HCT116 (cell line): ENCODE measurements at regions of chr2 and their contacts with region 1.

Region 1: GRCh38 chr2:109396202-109397180 is 217.3 kb downstream of the SEPTIN10 start:
- DNase-seq: no peak
- ATAC-seq: peak; percentile 77
- H3K4me3 ChIP-seq: no peak overlapping the region
- H3K27ac ChIP-seq: no peak overlapping the region
- H3K4me1 ChIP-seq: no peaks in the 10 kb centered on the region
- H3K27me3 ChIP-seq: no peaks in the 10 kb centered on the region; the same call in none of the 2 replicates
- CTCF ChIP-seq: peak; percentile 22 to 34 (median 27); a peak in 4 of 6 replicates
- POLR2A ChIP-seq: no peak
- RAD21 ChIP-seq: peak; percentile 52

Region 2: GRCh38 chr2:109128048-109128465 is 268.4 kb before region 1 on chr2:
- CTCF ChIA-PET with region 1: no interaction called
- POLR2A ChIA-PET with region 1: no interaction called
- RAD21 ChIA-PET with region 1: no interaction called
- intact Hi-C with region 1: loop called (anchors 2 kb)
- DNase-seq: peak; percentile 26
- ATAC-seq: peak; percentile 92
- H3K4me3 ChIP-seq: no peak overlapping the region
- H3K27ac ChIP-seq: no peak overlapping the region
- H3K4me1 ChIP-seq: peaks cover 12 to 17% of the 10 kb centered on the region in 2 experiments; a peak in 3 of 4 replicates
- H3K27me3 ChIP-seq: peaks cover 13% of the 10 kb centered on the region; the same call in 1 of the 2 replicates
- CTCF ChIP-seq: peak; percentile 60 to 81 (median 78); a peak in 5 of 6 replicates
- POLR2A ChIP-seq: no peak
- RAD21 ChIP-seq: peak; percentile 87

Region 3: GRCh38 chr2:109486711-109487535 is 90.4 kb after region 1 on chr2:
- CTCF ChIA-PET with region 1: no interaction called
- POLR2A ChIA-PET with region 1: no interaction called
- RAD21 ChIA-PET with region 1: no interaction called
- intact Hi-C with region 1: no loop called
- DNase-seq: no peak
- ATAC-seq: no peak
- H3K4me3 ChIP-seq: no peak overlapping the region
- H3K27ac ChIP-seq: no peak overlapping the region
- H3K4me1 ChIP-seq: no peaks in the 10 kb centered on the region
- H3K27me3 ChIP-seq: no peaks in the 10 kb centered on the region
- CTCF ChIP-seq: no peak
- POLR2A ChIP-seq: no peak
- RAD21 ChIP-seq: no peak